GM12878 (cell line): ENCODE measurements at regions of chr12 and their contacts with region 1.

Region 1: GRCh38 chr12:118330421-118331018 is 42.2 kb downstream of the TAOK3 start:
- DNase-seq: no peak
- ATAC-seq: peak; percentile 93
- H3K4me3 ChIP-seq: no peak overlapping the region
- H3K27ac ChIP-seq: peak overlapping the region; percentile 71
- H3K4me1 ChIP-seq: peaks cover 20% of the 10 kb centered on the region
- H3K27me3 ChIP-seq: no peaks in the 10 kb centered on the region
- CTCF ChIP-seq: no peak
- EP300 ChIP-seq: no peak
- POLR2A ChIP-seq: no peak
- RAD21 ChIP-seq: no peak

Region 2: DNA sequence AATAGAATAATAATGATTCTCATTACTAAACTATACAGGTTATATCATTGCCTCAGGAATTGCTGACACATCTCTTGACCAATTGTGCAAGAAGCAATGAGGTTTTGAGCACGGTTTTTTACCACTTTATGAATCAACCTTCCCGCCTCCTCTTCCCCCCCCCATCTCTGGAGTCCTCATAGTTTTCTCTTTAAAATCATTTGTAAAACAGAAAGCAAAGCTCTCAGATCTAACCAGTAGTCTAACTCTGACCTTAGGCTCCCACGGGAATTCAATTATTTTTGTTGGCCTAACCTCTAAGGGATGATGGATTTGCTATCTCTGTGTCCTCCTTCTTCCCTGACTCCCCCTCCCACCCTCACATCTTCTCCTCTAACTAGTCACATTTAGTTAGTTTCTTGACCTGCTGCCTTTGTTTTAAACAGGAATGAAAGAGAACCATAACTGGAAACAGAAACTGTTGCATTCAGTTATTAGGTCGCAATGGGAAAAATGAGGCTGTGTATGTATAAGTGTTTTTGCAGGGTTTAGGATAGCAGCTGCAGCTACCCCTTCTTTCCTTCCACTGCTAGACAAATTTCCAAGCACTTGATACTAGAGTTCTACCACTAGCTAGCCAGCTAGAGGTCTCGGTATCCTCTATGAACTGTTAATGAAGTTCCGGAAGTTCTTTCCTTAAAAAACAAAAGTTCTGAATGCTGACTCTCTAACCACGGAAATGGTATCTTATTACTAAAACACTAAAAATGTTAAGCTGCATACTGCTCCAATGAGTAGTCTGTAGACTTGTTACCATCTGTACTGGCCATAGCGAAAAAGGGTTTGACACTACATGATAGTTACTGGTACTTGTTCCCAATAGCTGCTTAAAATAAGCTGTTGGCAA is 23.2 kb before region 1 on chr12:
- CTCF ChIA-PET with region 1: interaction called, 5 read pairs
- POLR2A ChIA-PET with region 1: interaction called, 8 read pairs
- RAD21 ChIA-PET with region 1: interaction called, 6 read pairs
- SMC1A ChIA-PET with region 1: interaction called, 16 read pairs
- in situ Hi-C with region 1: no loop called
- intact Hi-C with region 1: no loop called
- DNase-seq: peak; percentile 69
- ATAC-seq: peak; percentile 78
- H3K4me3 ChIP-seq: peak overlapping the region; percentile 64
- H3K27ac ChIP-seq: peak overlapping the region; percentile 98
- H3K4me1 ChIP-seq: peaks cover 38% of the 10 kb centered on the region
- H3K27me3 ChIP-seq: no peaks in the 10 kb centered on the region
- CTCF ChIP-seq: no peak
- EP300 ChIP-seq: no peak; a peak in 1 of 4 replicates
- POLR2A ChIP-seq: no peak
- RAD21 ChIP-seq: no peak

Region 3: DNA sequence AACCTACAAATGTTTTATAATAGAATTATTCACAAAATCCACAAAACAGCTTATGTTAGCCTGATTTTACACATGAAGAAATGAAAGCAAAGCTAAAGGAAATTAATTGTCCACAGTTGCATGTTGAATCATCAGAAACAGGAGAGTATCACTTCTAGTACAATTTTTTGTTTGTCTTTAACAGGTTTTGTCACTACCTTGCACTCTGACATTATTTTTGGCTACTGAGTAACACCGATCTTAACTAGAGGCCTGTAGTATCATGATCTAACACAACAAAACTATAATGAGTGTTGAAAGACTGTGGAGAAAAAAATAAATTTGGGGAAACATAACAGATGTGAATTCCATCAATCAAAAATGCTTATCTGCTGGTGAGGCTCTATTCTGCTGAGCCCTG is 17.9 kb before region 1 on chr12:
- CTCF ChIA-PET with region 1: interaction called, 5 read pairs
- POLR2A ChIA-PET with region 1: interaction called, 9 read pairs
- RAD21 ChIA-PET with region 1: interaction called, 6 read pairs
- SMC1A ChIA-PET with region 1: interaction called, 16 read pairs
- in situ Hi-C with region 1: no loop called
- intact Hi-C with region 1: no loop called
- DNase-seq: peak; percentile 73
- ATAC-seq: peak; percentile 87
- H3K4me3 ChIP-seq: peak overlapping the region; percentile 47; the same call in 1 of the 2 replicates
- H3K27ac ChIP-seq: peak overlapping the region; percentile 82
- H3K4me1 ChIP-seq: peaks cover 40% of the 10 kb centered on the region
- H3K27me3 ChIP-seq: no peaks in the 10 kb centered on the region
- CTCF ChIP-seq: no peak
- EP300 ChIP-seq: peak in 1 of 2 experiments; percentile 38; a peak in 2 of 4 replicates
- POLR2A ChIP-seq: no peak
- RAD21 ChIP-seq: no peak